Endothelial cell of umbilical vein (primary cell): ENCODE measurements at regions of chr14 and their contacts with region 1.

Region 1: GRCh38 chr14:72781476-72782181 is 112.3 kb downstream of the DPF3 start:
- DNase-seq: peak; percentile 59
- H3K4me3 ChIP-seq: no peak overlapping the region
- H3K27ac ChIP-seq: peak overlapping the region; percentile 60
- H3K4me1 ChIP-seq: peaks cover 4% of the 10 kb centered on the region
- H3K27me3 ChIP-seq: no peaks in the 10 kb centered on the region
- CTCF ChIP-seq: no peak
- POLR2A ChIP-seq: no peak

Region 2: GRCh38 chr14:72708708-72709476 is 72.7 kb before region 1 on chr14:
- CTCF ChIA-PET with region 1: no interaction called
- POLR2A ChIA-PET with region 1: no interaction called
- dilution Hi-C with region 1: no loop called
- intact Hi-C with region 1: no loop called
- DNase-seq: no peak
- H3K4me3 ChIP-seq: no peak overlapping the region
- H3K27ac ChIP-seq: no peak overlapping the region
- H3K4me1 ChIP-seq: no peaks in the 10 kb centered on the region
- H3K27me3 ChIP-seq: no peaks in the 10 kb centered on the region
- CTCF ChIP-seq: no peak
- POLR2A ChIP-seq: no peak

Region 3: GRCh38 chr14:72755766-72756165 is 25.9 kb before region 1 on chr14:
- CTCF ChIA-PET with region 1: no interaction called
- POLR2A ChIA-PET with region 1: no interaction called
- dilution Hi-C with region 1: no loop called
- intact Hi-C with region 1: no loop called
- DNase-seq: no peak
- H3K4me3 ChIP-seq: no peak overlapping the region
- H3K27ac ChIP-seq: no peak overlapping the region
- H3K4me1 ChIP-seq: no peaks in the 10 kb centered on the region
- H3K27me3 ChIP-seq: no peaks in the 10 kb centered on the region
- CTCF ChIP-seq: no peak
- POLR2A ChIP-seq: no peak

Region 4: DNA sequence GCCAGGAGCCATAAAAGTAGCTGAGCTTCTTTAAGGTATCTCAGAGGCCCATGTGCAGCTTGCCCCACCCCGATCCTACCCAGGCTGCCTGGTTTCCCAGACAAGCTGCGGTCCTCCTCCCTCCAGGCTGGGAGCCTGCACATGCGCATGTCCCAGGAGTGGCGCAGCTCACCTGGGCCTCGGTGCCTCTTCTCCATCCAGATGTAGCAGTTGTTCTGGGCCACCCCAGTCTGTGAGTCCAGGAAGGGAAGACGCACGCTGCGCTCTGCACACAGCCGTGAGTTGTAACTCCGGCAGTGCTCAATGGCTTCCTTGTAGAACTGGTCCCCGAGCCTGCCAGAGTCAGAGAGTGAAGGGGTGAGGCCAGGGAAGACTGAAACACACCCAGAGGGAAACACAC is 10.1 kb before region 1 on chr14:
- CTCF ChIA-PET with region 1: no interaction called
- POLR2A ChIA-PET with region 1: no interaction called
- dilution Hi-C with region 1: no loop called
- intact Hi-C with region 1: no loop called
- DNase-seq: no peak
- H3K4me3 ChIP-seq: no peak overlapping the region
- H3K27ac ChIP-seq: no peak overlapping the region
- H3K4me1 ChIP-seq: no peaks in the 10 kb centered on the region
- H3K27me3 ChIP-seq: no peaks in the 10 kb centered on the region
- CTCF ChIP-seq: no peak
- POLR2A ChIP-seq: no peak

Region 5: DNA sequence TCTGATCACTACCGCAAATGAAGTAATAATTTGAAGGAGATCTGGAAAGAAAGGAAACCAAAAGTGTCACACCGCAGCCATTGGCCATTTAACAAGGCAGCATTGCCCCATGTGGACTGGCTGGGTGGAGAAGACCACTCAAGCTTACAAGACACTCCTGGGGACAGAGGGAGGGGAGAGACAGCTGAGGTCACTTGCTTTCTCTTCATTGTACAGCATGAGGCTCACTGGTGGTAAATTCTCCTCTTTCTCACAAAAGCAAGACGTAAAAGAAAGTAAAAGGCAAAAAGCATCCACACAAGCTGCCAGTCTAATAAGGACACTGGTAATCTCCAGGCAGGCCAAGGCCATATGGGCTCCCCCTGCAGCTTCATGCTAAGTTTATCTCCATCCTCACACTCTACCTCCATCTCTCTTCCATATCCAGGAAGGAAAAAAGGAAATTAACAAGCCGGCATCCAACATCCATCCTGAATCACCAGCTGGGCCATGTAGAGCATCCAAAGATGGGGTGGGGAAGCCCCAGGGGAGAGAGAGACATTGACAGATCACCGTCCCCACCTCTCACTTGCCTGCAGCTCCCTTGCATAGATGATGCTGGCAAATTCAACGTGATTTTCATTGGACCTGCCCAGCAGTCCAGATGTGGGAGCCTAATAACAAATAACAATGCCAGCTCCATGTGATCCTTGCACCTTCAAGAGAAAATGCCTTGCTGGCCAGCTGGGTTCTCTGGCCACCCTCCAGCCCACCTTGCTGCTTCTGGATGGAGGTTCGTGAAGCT is 11.7 kb after region 1 on chr14:
- CTCF ChIA-PET with region 1: interaction called, 10 read pairs
- POLR2A ChIA-PET with region 1: no interaction called
- dilution Hi-C with region 1: no loop called
- intact Hi-C with region 1: no loop called
- DNase-seq: no peak
- H3K4me3 ChIP-seq: no peak overlapping the region
- H3K27ac ChIP-seq: no peak overlapping the region
- H3K4me1 ChIP-seq: no peaks in the 10 kb centered on the region
- H3K27me3 ChIP-seq: no peaks in the 10 kb centered on the region
- CTCF ChIP-seq: no peak
- POLR2A ChIP-seq: no peak